ENCODE measurements at regions of chr16 and their contacts with region 1.

Region 1: DNA sequence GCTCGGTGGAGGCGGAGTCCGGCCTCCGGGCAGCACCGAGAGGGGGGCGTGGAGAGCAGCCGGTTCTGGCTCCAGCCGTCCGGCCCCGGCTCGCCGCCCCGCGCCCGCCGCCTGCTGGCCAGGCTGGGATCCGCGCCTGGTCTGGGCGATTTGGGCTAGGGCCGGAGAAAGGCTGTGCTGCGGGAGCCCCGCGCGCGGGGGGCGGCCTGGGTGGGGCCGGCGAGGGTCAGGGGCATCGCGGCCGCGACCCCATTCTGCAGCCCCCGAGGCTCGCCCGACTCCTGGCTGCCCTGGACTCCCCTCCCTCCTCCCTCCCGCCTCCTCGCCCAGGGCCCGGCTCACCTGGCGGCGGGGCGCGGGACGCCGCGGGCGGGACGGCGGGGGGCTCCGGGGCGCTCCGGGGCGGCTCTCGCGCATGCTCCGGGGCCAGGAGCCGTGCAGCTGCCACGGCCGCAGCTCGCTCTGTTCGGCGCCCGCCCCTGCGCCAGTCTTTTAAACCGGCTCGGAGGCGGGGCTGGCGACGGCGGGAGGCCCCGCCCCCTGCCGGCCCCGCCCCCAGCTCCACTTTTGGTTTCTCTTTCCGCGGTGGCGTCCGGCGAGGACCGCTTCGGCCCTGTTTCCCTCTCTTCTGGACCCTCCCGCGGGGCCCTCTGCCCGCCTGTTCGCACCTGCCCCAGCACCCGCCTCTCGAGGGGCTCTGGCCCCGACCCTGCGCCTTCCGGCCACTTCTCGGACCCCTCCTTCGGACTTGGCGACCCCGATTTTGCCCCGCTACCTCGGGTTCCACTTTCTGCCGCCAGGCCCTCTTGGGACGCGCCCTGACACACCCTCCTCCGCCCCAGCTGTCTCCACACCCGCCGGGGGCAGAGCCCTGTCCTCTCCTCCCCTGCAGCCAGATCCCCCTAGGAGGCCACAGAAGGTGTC is at the start of gene SOCS1:
- DNase-seq: peak; percentile 79 to 91
- H3K4me3 ChIP-seq: peak within 1 kb of the TSS; percentile 81
- H3K4me3 Mint-ChIP-seq: peak within 1 kb of the TSS; percentile 97
- H3K27ac Mint-ChIP-seq: peak within 1 kb of the TSS; percentile 95
- H3K4me1 ChIP-seq: peaks cover 27% of the 10 kb centered on the region
- H3K4me1 Mint-ChIP-seq: peaks cover 24% of the 10 kb centered on the region
- H3K27me3 ChIP-seq: no peaks in the 10 kb centered on the region
- H3K27me3 Mint-ChIP-seq: no peaks in the 10 kb centered on the region
- CTCF ChIP-seq: peak in 1 of 2 experiments; percentile 83
- total RNA-seq, gene SOCS1: 8.1 and 13.2 TPM in 2 replicates

Region 2: DNA sequence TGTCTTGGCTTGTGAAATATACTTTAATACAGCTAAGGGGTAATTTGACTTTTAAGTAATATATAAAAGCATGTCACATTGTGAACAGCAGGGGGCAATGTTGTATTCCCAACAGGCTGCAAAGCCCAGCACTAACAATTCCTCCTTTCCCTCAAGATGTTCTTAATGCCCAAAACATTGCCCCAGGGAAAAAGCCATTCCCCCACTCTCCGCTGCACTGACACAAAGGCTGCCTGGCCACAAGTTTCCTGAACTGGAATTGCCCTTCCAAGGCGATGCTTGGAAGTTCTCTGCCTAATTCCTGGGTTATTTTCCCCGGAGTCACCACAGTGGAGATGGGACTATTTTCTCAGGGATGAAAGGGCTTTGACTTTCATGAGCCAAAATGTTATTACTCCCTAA is 284.4 kb before region 1 on chr16:
- CTCF ChIA-PET with region 1: interaction called, 23 read pairs
- POLR2A ChIA-PET with region 1: interaction called, 3 read pairs
- intact Hi-C with region 1: loop called (anchors 1 kb)
- DNase-seq: peak; percentile 53 to 56
- H3K4me3 ChIP-seq: no peak overlapping the region
- H3K4me3 Mint-ChIP-seq: no peak overlapping the region
- H3K27ac Mint-ChIP-seq: no peak overlapping the region
- H3K4me1 ChIP-seq: 0 out of 2 replicates have a peak, but pooled peaks cover 3% of the 10 kb centered on the region
- H3K4me1 Mint-ChIP-seq: no peaks in the 10 kb centered on the region
- H3K27me3 ChIP-seq: no peaks in the 10 kb centered on the region
- H3K27me3 Mint-ChIP-seq: no peaks in the 10 kb centered on the region
- CTCF ChIP-seq: peak; percentile 52 to 67

Region 3: DNA sequence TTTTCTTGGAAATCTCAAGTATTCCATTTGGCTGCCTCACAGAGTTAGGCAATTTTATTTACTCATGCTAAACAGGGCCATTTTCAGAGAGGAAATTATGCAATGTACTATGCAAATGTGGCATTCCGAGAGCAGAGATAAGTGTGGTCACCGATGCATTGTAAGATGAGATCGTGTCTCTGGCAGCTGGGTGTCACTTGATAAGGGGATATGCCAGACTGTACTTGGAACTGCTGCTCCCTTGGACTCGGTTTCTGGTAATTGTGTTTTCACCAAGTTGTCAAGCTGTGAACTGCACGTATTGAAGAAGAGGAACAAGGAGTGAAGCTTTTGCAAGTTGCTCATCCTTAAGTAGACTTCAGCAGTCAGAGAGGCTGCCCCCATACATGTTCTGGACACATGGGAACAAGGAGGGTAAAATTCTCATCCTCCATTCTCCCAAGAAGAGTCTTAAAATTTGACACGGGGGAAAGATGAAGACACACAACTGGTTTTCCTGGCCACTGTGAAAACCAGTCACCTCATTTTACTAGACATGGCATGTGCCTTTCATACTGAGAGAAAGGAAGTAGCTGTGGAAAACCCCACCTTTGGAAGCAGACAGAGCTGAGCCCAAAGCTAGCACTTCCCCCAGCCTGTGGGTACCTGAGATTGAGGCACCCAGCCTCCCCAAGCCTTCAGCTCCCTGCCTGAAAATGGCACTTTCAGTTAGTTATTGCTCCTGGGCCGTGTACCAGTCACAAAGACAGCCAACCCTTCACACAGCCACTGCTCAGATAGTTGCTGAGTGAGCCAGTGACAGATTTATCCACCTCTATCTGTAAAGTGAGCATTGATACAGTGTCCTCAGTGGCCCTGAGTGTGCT is 150.7 kb before region 1 on chr16:
- CTCF ChIA-PET with region 1: interaction called, 12 read pairs
- POLR2A ChIA-PET with region 1: interaction called, 16 read pairs
- intact Hi-C with region 1: loop called (anchors 10 kb)
- DNase-seq: peak; percentile 53 to 59
- H3K4me3 ChIP-seq: no peak overlapping the region
- H3K4me3 Mint-ChIP-seq: no peak overlapping the region
- H3K27ac Mint-ChIP-seq: no peak overlapping the region
- H3K4me1 ChIP-seq: peaks cover 24% of the 10 kb centered on the region
- H3K4me1 Mint-ChIP-seq: peaks cover 13% of the 10 kb centered on the region
- H3K27me3 ChIP-seq: no peaks in the 10 kb centered on the region
- H3K27me3 Mint-ChIP-seq: no peaks in the 10 kb centered on the region
- CTCF ChIP-seq: no peak

Region 4: DNA sequence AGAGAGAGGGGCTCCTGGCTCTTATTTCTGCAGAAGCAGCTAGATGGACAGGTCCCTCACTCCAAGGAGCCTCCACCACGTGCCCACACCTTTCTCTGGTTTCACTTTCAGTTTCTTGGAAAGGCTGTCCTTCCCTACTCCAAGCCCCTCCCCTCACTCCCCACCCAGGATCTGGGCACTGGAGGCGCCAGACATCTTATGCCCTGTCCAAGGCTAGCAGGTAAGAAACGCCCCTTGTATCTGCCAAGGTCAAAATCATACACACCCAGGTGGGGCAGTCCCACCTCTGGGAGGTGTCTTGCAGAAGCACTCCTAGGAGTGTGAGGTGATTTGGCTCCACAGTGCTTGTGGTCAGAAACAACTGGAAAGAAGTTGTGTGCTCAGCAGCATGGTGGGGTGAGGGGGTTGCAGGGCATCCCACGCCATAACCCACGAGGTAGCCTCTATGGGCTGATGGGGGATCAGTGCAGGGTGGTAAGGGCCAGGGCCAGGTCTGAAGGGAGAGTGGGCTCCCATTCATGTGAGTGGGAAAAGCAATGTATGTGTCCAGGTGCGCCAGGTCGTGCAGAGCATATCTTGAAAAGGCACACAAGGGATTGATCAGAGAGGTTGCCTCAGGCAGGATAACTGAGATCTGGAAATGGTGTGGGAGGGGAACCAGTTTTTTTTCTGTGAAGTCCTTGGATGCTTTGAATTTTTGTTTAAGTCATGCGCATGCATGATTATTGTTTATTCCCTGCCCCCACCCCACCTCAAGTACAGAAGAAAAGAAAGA is 56.9 kb after region 1 on chr16:
- CTCF ChIA-PET with region 1: interaction called, 3 read pairs
- POLR2A ChIA-PET with region 1: interaction called, 19 read pairs
- intact Hi-C with region 1: loop called (anchors 1 kb)
- DNase-seq: peak; percentile 82 to 86
- H3K4me3 ChIP-seq: peak overlapping the region; percentile 17
- H3K4me3 Mint-ChIP-seq: peak overlapping the region; percentile 70
- H3K27ac Mint-ChIP-seq: peak overlapping the region; percentile 80
- H3K4me1 ChIP-seq: peaks cover 38% of the 10 kb centered on the region
- H3K4me1 Mint-ChIP-seq: peaks cover 14% of the 10 kb centered on the region
- H3K27me3 ChIP-seq: no peaks in the 10 kb centered on the region
- H3K27me3 Mint-ChIP-seq: no peaks in the 10 kb centered on the region
- CTCF ChIP-seq: no peak

Region 5: GRCh38 chr16:11356573-11357331 is 100.8 kb after region 1 on chr16:
- CTCF ChIA-PET with region 1: interaction called, 12 read pairs
- POLR2A ChIA-PET with region 1: interaction called, 17 read pairs
- intact Hi-C with region 1: loop called (anchors 1 kb)
- DNase-seq: peak; percentile 60 to 66
- H3K4me3 ChIP-seq: no peak overlapping the region
- H3K4me3 Mint-ChIP-seq: no peak overlapping the region
- H3K27ac Mint-ChIP-seq: no peak overlapping the region
- H3K4me1 ChIP-seq: peaks cover 38% of the 10 kb centered on the region
- H3K4me1 Mint-ChIP-seq: peaks cover 6% of the 10 kb centered on the region
- H3K27me3 ChIP-seq: no peaks in the 10 kb centered on the region
- H3K27me3 Mint-ChIP-seq: no peaks in the 10 kb centered on the region
- CTCF ChIP-seq: peak; percentile 54 to 67

Region 6: DNA sequence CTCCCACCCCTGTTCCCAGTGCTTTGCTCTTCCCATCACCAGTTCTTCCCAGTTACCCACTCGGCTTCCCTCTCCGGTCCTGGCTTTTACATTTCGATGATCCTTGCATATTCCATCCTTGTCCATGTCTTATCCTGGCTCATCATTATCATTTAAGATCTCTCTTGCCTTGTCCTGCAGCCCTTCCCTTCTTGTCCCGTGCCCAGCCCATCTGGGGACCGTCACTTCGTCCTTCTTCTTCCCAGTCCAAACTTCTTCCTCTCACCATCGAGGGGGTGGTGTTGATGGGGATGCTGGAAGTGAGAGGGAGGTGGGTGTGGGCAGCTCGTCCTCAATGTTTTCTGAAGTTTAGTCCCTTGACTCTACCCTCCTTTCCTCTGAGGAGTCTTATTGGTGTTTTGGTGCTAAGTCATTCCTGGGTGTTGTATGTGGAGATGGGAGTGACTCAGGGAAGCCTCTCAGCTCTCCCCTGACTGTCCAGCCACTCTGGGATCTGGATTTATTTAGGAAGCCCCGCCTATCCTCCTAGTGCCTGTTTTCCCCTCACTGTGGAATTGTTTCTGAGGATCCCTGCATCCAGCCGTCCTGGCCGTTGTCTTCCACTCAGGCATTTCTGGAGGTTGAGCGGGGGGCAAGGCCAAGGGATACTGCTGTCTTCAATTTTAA is 721.5 kb after region 1 on chr16:
- CTCF ChIA-PET with region 1: no interaction called
- POLR2A ChIA-PET with region 1: interaction called, 15 read pairs
- intact Hi-C with region 1: no loop called
- DNase-seq: no peak
- H3K4me3 ChIP-seq: peak overlapping the region; percentile 95
- H3K4me3 Mint-ChIP-seq: peak overlapping the region; percentile 98
- H3K27ac Mint-ChIP-seq: peak overlapping the region; percentile 96
- H3K4me1 ChIP-seq: no peaks in the 10 kb centered on the region
- H3K4me1 Mint-ChIP-seq: peaks cover 16% of the 10 kb centered on the region
- H3K27me3 ChIP-seq: no peaks in the 10 kb centered on the region
- H3K27me3 Mint-ChIP-seq: no peaks in the 10 kb centered on the region
- CTCF ChIP-seq: no peak

Measured in Caco-2 (cell line).